CD4-positive, alpha-beta memory T cell (primary cell): ENCODE measurements at regions of chr14 and their contacts with region 1.

Region 1: DNA sequence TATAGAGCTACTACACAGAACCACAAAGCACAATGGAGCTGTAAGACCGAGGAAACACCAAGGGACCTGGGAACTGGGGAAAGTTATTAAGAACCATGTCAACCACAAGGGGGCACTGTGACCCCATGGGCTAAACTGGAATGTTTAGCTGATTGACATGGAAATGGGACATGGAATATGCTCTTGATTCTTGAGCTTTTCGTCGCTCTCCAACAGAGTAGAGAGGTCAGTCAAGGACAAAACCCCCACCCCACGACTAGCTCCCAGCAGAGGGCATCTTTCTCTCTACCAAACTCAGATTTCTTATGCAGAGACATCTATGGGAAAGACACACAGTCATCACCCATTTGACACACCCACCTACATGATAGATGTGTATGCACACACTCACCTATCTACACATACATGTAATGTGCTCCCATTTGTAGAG is 10.1 kb downstream of the NDRG2 start:
- DNase-seq: peak; percentile 69 to 81 (median 76)
- H3K4me3 ChIP-seq: no peak overlapping the region
- H3K4me3 Mint-ChIP-seq: no peak overlapping the region
- H3K27ac ChIP-seq: no peak overlapping the region
- H3K27ac Mint-ChIP-seq: peak overlapping the region in 2 of 7 donors; percentile 63 to 72
- H3K4me1 ChIP-seq: no peaks in the 10 kb centered on the region
- H3K4me1 Mint-ChIP-seq: no peaks in the 10 kb centered on the region
- H3K27me3 ChIP-seq: peaks cover 5% of the 10 kb centered on the region
- H3K27me3 Mint-ChIP-seq: peaks cover 7 to 9% of the 10 kb centered on the region in 2 donors

Region 2: DNA sequence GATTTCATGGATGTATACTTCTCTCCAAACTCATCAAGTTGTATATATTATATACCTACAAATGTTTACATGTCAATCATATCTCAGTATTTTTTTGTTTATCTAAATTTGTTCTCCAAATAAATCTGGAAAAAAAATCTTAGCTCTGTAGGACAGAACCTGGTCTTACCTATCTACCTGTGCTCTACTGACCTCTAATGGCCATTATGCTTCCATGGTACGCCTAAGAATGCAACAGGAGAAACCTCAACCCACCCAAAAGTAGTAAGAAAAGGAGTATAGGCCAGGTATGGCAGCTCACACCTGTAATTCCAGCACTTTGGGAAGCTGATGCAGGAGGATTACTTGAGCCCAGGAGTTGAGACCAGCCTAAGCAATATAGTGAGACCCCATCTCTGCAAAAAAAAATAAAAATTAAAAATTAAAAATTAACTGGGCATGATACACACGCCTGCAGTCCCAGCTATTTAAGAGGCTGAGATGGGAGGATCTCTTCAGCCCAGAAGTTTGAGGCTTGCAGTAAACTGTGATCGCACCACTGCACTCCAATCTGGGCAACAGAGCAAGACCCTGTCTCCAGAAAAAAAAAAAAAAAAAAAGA is 767.0 kb before region 1 on chr14:
- CTCF ChIA-PET with region 1: no interaction called
- POLR2A ChIA-PET with region 1: no interaction called
- intact Hi-C with region 1: no loop called
- DNase-seq: peak in 2 of 5 donors; percentile 3
- H3K4me3 ChIP-seq: no peak overlapping the region
- H3K4me3 Mint-ChIP-seq: no peak overlapping the region
- H3K27ac ChIP-seq: no peak overlapping the region
- H3K27ac Mint-ChIP-seq: no peak overlapping the region
- H3K4me1 ChIP-seq: no peaks in the 10 kb centered on the region
- H3K4me1 Mint-ChIP-seq: peaks cover 0 to 1% (median 0%) of the 10 kb centered on the region in 4 donors
- H3K27me3 ChIP-seq: no peaks in the 10 kb centered on the region
- H3K27me3 Mint-ChIP-seq: no peaks in the 10 kb centered on the region

Region 3: DNA sequence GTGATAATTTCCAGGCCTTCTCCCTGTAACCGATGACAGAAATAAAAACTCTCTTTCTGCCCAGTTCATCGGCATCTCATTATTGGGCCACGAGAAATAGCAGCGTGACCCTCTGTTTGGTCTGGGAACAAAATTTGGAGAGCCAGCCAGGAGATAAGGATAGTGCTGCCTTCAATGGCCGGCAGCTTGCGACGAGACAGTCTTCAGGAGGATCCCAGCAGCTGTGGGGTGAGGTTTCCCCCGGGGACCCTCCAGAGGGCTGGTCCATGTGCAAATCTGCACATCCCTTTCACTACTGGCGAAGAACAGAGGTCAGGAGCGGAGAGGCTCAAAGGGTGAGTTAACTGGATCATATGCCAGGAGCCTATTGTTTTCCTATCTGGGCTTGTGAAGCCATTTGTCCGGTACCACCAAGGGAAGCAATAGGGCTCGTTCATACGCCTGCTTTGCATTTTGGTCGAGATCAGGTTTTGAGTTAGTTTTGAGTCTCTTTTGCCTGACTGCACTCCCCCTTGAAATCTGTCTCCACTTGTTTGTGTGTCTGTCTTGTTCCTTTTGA is 10.9 kb before region 1 on chr14:
- CTCF ChIA-PET with region 1: interaction called, 57 read pairs
- POLR2A ChIA-PET with region 1: no interaction called
- intact Hi-C with region 1: no loop called
- DNase-seq: no peak
- H3K4me3 ChIP-seq: no peak overlapping the region
- H3K4me3 Mint-ChIP-seq: no peak overlapping the region
- H3K27ac ChIP-seq: no peak overlapping the region
- H3K27ac Mint-ChIP-seq: no peak overlapping the region
- H3K4me1 ChIP-seq: no peaks in the 10 kb centered on the region
- H3K4me1 Mint-ChIP-seq: no peaks in the 10 kb centered on the region
- H3K27me3 ChIP-seq: no peaks in the 10 kb centered on the region
- H3K27me3 Mint-ChIP-seq: no peaks in the 10 kb centered on the region

Region 4: DNA sequence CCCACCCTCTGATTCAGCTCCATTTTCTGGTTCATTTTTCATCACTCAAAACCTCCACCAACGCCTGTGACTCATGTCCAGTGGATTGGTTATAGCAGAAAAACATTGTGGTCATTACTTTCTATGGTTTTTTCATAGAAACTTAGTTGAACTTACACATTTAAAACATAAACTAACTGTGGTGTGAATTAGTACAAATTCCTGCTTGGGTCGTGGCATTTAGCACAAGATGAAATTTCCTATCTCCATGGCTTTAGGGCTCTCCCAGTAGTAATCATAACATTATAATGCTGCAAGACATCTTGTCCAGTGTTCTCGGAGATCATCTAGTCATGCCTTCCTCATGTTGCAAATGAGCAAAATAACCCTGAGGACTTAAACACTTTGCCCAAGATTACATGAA is 34.5 kb after region 1 on chr14:
- CTCF ChIA-PET with region 1: interaction called, 349 read pairs
- POLR2A ChIA-PET with region 1: interaction called, 7 read pairs
- intact Hi-C with region 1: no loop called
- DNase-seq: no peak
- H3K4me3 ChIP-seq: no peak overlapping the region
- H3K4me3 Mint-ChIP-seq: no peak overlapping the region
- H3K27ac ChIP-seq: no peak overlapping the region
- H3K27ac Mint-ChIP-seq: no peak overlapping the region
- H3K4me1 ChIP-seq: peaks cover 8% of the 10 kb centered on the region
- H3K4me1 Mint-ChIP-seq: peaks cover 6 to 14% (median 9%) of the 10 kb centered on the region in 4 donors
- H3K27me3 ChIP-seq: peaks cover 3% of the 10 kb centered on the region
- H3K27me3 Mint-ChIP-seq: peaks cover 3 to 8% of the 10 kb centered on the region in 2 donors

Region 5: DNA sequence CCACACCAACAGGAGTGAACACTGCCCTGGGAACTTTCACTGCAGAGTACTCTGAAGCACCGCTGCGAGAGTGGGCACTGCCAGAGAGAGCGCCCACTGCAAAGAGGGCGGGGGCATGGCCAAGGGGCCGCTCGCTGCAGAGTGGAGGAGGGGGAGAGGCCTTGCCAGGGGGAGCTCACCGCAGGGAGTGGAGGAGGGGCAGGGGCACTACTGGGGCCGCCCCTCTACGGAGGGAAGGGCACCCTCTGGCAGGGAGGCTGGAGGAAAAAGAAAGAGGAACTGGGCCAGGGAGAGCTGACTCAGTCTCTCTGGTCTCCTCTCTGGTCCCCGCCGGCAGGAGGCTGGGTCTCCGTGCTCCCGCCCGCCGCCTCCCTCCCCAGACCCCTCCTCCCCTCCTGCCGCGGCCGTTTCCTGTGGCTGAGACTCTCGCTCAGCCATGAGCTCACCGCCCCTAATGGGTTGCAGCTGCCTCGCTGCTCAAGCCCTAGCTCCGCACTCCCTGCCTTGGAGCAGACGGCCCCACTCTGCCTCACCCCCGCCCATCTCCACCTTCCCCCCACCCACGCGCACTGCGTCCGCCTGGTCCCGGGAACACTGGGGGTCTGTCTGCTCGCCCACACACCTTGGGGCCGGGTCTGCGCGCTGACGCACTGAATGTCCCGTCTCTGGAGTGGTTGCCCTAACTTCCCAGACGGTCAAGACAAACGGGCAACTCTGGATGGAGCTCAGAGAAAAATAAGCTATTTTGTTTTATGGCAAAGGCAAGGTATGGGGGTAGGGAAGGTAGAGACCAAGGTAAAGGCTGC is 56.7 kb after region 1 on chr14:
- CTCF ChIA-PET with region 1: interaction called, 44 read pairs
- POLR2A ChIA-PET with region 1: interaction called, 6 read pairs
- intact Hi-C with region 1: loop called (anchors 1 kb)
- DNase-seq: peak in 4 of 5 donors; percentile 23 to 75 (median 32)
- H3K4me3 ChIP-seq: peak overlapping the region in 1 of 2 donors; percentile 42
- H3K4me3 Mint-ChIP-seq: peak overlapping the region; percentile 80 to 90 (median 86)
- H3K27ac ChIP-seq: peak overlapping the region; percentile 25
- H3K27ac Mint-ChIP-seq: peak overlapping the region in 6 of 7 donors; percentile 77 to 88 (median 83)
- H3K4me1 ChIP-seq: peaks cover 35% of the 10 kb centered on the region
- H3K4me1 Mint-ChIP-seq: peaks cover 22 to 41% (median 30%) of the 10 kb centered on the region in 4 donors
- H3K27me3 ChIP-seq: peaks cover 52% of the 10 kb centered on the region
- H3K27me3 Mint-ChIP-seq: peaks cover 29 to 50% of the 10 kb centered on the region in 2 donors

Region 6: GRCh38 chr14:21103710-21104447 is 89.1 kb after region 1 on chr14:
- CTCF ChIA-PET with region 1: interaction called, 399 read pairs
- POLR2A ChIA-PET with region 1: interaction called, 52 read pairs
- intact Hi-C with region 1: loop called (anchors 1 kb)
- DNase-seq: peak; percentile 92 to 95 (median 95)
- H3K4me3 ChIP-seq: peak overlapping the region; percentile 96
- H3K4me3 Mint-ChIP-seq: peak overlapping the region; percentile 85 to 94 (median 90)
- H3K27ac ChIP-seq: peak overlapping the region; percentile 90
- H3K27ac Mint-ChIP-seq: peak overlapping the region; percentile 91 to 99 (median 97)
- H3K4me1 ChIP-seq: peaks cover 29% of the 10 kb centered on the region
- H3K4me1 Mint-ChIP-seq: peaks cover 15 to 40% (median 23%) of the 10 kb centered on the region in 4 donors
- H3K27me3 ChIP-seq: no peaks in the 10 kb centered on the region
- H3K27me3 Mint-ChIP-seq: no peaks in the 10 kb centered on the region